ENCODE measurements at regions of chr7 and their contacts with region 1.

Region 1: GRCh38 chr7:12490117-12490688 is 80.3 kb upstream of the SCIN start:
- DNase-seq: no peak
- ATAC-seq: peak; percentile 44
- H3K4me3 Mint-ChIP-seq: no peak overlapping the region
- H3K27ac Mint-ChIP-seq: no peak overlapping the region
- H3K4me1 Mint-ChIP-seq: no peaks in the 10 kb centered on the region
- H3K27me3 Mint-ChIP-seq: peaks cover 2% of the 10 kb centered on the region

Region 2: GRCh38 chr7:11831736-11832495 is 658.3 kb before region 1 on chr7 and contains the start of gene THSD7A:
- CTCF ChIA-PET with region 1: interaction called, 3 read pairs
- POLR2A ChIA-PET with region 1: no interaction called
- intact Hi-C with region 1: loop called in 1 of 2 experiments (anchors 5 kb)
- DNase-seq: peak; percentile 27
- ATAC-seq: peak; percentile 55
- H3K4me3 Mint-ChIP-seq: peak within 1 kb of the TSS; percentile 15
- H3K27ac Mint-ChIP-seq: no peak within 1 kb of the TSS
- H3K4me1 Mint-ChIP-seq: peaks cover 13% of the 10 kb centered on the region
- H3K27me3 Mint-ChIP-seq: peaks cover 41% of the 10 kb centered on the region
- total RNA-seq, gene THSD7A: not detected

Region 3: DNA sequence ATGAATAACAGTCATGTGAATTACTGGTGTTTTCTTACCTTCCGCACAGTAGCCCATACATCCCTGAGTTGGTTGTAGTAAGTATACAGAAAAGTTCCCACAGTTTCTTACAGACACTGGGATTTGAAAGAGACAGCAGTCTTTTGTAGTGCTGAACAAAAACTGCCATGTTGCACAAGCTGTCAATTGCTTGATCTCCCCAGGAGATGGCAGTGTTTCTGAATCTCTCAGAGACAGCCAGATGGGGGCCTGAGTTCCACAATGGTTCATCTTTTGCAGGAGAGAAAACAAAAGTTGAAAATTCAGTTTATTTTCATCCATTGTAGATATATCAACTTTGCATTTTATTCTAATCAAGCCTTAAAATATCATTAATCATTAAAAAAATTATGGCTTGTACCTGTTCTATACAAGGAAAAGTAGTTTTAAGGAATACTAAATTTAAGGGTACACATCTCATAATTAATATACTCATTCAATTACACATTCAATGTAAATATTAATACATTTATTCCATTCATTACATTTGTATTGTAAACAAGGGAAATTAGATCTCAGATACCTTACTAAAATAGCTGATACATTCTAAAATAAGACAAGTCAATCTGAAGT is 101.0 kb before region 1 on chr7:
- CTCF ChIA-PET with region 1: interaction called, 8 read pairs
- POLR2A ChIA-PET with region 1: no interaction called
- intact Hi-C with region 1: loop called in 1 of 2 experiments (anchors 2 kb)
- DNase-seq: peak; percentile 57
- ATAC-seq: peak; percentile 53
- H3K4me3 Mint-ChIP-seq: no peak overlapping the region
- H3K27ac Mint-ChIP-seq: no peak overlapping the region
- H3K4me1 Mint-ChIP-seq: no peaks in the 10 kb centered on the region
- H3K27me3 Mint-ChIP-seq: peaks cover 2% of the 10 kb centered on the region

Region 4: GRCh38 chr7:12458520-12459131 is 31.6 kb before region 1 on chr7:
- CTCF ChIA-PET with region 1: interaction called, 77 read pairs
- POLR2A ChIA-PET with region 1: no interaction called
- intact Hi-C with region 1: loop called (anchors 1 kb)
- DNase-seq: no peak
- ATAC-seq: peak; percentile 81
- H3K4me3 Mint-ChIP-seq: no peak overlapping the region
- H3K27ac Mint-ChIP-seq: no peak overlapping the region
- H3K4me1 Mint-ChIP-seq: no peaks in the 10 kb centered on the region
- H3K27me3 Mint-ChIP-seq: peaks cover 12% of the 10 kb centered on the region

Measured in activated CD4-positive, alpha-beta T cell treated with anti-CD3 and anti-CD28 coated beads for 36 hours (primary cell).